AG04450 (cell line): ENCODE measurements at regions of chr3 and their contacts with region 1.

Region 1: DNA sequence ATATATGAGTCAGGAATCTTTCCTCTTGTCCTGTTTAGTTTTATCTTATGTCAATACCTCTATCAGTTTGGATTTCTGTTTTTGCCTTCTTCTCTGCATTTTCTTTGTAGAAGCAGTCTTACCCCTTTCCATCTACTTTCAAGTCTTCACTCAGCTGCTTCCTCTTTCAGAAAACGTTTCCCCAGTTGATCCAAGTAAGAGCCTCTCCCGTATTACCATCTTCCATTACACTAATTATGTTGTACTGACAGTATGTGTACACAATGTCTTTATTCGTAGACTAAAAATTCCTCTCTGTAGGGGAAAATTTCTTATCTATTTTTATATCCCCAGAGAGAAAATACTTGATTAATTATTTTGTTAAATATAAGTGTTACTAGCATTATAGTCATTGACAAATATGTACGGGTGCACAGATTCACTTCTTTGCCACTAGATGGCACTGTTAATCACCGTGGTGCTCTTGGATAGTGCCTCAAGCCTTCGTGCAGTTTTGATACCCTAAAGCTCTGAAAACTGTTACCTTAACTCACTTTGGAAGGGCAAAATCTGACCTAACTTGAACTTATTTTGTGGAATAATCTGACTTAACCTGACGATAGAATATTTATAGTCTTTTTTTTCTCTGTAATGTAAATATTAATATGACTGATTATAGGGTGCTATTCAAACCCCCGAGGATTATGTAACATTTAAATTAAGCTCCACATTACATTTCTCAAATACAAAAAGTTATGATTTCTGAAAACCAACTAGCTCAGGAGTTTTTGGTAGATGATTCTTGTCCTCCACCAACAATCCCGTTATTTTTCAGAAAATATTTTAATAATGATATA is 74.2 kb upstream of the POU1F1 start:
- DNase-seq: peak; percentile 23
- H3K4me3 ChIP-seq: no peak overlapping the region
- H3K27ac ChIP-seq: no peak overlapping the region
- H3K27me3 ChIP-seq: no peaks in the 10 kb centered on the region
- CTCF ChIP-seq: peak; percentile 90

Region 2: GRCh38 chr3:87260270-87260669 is 90.3 kb before region 1 on chr3:
- CTCF ChIA-PET with region 1: interaction called, 12 read pairs
- POLR2A ChIA-PET with region 1: no interaction called
- DNase-seq: peak; percentile 10
- H3K4me3 ChIP-seq: no peak overlapping the region
- H3K27ac ChIP-seq: no peak overlapping the region
- H3K27me3 ChIP-seq: no peaks in the 10 kb centered on the region
- CTCF ChIP-seq: peak; percentile 79

Region 3: DNA sequence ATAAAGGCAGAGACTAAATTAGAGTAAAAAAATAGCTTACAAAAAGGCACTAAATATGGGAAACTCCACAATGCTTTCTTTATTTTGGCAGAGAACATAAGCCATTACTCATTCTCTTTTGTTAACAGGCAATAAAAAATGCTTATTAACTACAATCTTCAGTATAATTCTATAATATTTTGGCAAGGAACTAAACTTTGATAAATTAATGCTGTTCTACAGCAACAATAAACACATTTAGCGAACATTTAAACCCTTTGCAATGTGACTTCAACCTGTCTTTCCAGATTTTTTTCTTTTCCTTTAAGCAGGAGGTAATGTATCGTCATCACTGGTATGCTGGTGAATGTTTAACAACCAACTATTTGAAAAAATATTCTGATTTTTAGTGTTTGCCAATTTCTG is 32.0 kb before region 1 on chr3:
- CTCF ChIA-PET with region 1: interaction called, 10 read pairs
- POLR2A ChIA-PET with region 1: no interaction called
- DNase-seq: no peak
- H3K4me3 ChIP-seq: no peak overlapping the region
- H3K27ac ChIP-seq: no peak overlapping the region
- H3K27me3 ChIP-seq: peaks cover 4% of the 10 kb centered on the region
- CTCF ChIP-seq: no peak

Region 4: DNA sequence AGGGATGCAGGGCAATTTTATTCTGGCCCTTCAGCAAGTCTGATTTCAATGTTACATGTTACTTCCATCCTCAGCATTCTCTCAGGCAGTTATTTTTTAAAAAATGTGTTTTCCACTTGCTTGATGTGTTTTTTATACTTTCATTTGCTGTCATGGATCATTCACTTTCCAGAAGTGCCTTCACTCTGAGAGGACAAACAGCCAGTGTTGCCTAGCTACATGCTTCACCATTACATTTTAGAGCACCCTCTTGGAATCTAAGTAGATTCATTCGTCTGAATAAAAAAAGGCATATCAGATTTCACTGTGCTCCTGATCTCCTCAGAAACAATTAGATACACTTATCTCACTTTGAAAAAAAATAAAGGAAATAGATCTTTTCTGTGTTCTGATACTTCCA is 19.4 kb after region 1 on chr3:
- CTCF ChIA-PET with region 1: interaction called, 17 read pairs
- POLR2A ChIA-PET with region 1: no interaction called
- DNase-seq: no peak
- H3K4me3 ChIP-seq: no peak overlapping the region
- H3K27ac ChIP-seq: no peak overlapping the region
- H3K27me3 ChIP-seq: no peaks in the 10 kb centered on the region
- CTCF ChIP-seq: no peak

Region 5: GRCh38 chr3:88003115-88003755 is 652.7 kb after region 1 on chr3:
- CTCF ChIA-PET with region 1: interaction called, 72 read pairs
- POLR2A ChIA-PET with region 1: no interaction called
- DNase-seq: peak; percentile 8
- H3K4me3 ChIP-seq: no peak overlapping the region
- H3K27ac ChIP-seq: no peak overlapping the region
- H3K27me3 ChIP-seq: no peaks in the 10 kb centered on the region
- CTCF ChIP-seq: peak; percentile 78

Region 6: GRCh38 chr3:88180398-88180999 is 829.9 kb after region 1 on chr3:
- CTCF ChIA-PET with region 1: interaction called, 50 read pairs
- POLR2A ChIA-PET with region 1: no interaction called
- DNase-seq: peak; percentile 30
- H3K4me3 ChIP-seq: no peak overlapping the region
- H3K27ac ChIP-seq: no peak overlapping the region
- H3K27me3 ChIP-seq: no peaks in the 10 kb centered on the region
- CTCF ChIP-seq: peak; percentile 66

Region 7: GRCh38 chr3:89252866-89253265 is 1902.3 kb after region 1 on chr3:
- CTCF ChIA-PET with region 1: no interaction called
- POLR2A ChIA-PET with region 1: no interaction called
- DNase-seq: no peak
- H3K4me3 ChIP-seq: no peak overlapping the region
- H3K27ac ChIP-seq: no peak overlapping the region
- H3K27me3 ChIP-seq: no peaks in the 10 kb centered on the region
- CTCF ChIP-seq: no peak